ENCODE measurements at regions of chr13 and their contacts with region 1.

Region 1: DNA sequence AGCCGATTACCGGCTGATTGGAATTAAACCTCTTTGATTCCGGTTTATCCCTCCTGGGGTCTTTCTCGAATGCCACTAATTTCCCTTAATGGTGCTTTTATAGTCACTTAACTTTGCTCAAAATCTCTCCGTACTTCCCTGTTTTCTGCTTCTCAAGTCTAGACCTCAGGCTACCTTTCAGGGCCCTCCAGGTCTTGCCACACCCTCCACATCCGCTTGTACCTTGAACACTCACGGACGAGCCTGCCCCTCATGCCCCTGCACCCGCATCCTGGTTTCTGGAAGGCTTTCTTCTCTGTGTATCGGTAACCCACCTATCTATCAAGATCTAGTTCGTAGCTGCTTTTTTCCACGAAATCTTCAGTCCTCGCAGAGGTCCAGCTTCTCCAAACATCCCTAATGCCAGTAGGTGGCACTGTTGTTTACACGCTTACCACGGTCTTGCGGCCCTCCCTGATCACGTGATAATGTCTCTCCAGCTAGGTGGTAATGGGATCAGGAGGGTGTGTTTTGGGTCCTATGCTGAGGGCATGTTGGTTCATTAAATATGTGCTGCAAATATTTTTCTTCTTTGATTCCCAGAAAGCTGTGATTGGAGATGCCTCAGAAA is 13.8 kb downstream of the ATP12A start:
- DNase-seq: peak; percentile 60
- H3K4me3 Mint-ChIP-seq: peak overlapping the region; percentile 3
- H3K27ac Mint-ChIP-seq: no peak overlapping the region
- H3K4me1 Mint-ChIP-seq: peaks cover 18% of the 10 kb centered on the region
- H3K27me3 Mint-ChIP-seq: peaks cover 38% of the 10 kb centered on the region

Region 2: DNA sequence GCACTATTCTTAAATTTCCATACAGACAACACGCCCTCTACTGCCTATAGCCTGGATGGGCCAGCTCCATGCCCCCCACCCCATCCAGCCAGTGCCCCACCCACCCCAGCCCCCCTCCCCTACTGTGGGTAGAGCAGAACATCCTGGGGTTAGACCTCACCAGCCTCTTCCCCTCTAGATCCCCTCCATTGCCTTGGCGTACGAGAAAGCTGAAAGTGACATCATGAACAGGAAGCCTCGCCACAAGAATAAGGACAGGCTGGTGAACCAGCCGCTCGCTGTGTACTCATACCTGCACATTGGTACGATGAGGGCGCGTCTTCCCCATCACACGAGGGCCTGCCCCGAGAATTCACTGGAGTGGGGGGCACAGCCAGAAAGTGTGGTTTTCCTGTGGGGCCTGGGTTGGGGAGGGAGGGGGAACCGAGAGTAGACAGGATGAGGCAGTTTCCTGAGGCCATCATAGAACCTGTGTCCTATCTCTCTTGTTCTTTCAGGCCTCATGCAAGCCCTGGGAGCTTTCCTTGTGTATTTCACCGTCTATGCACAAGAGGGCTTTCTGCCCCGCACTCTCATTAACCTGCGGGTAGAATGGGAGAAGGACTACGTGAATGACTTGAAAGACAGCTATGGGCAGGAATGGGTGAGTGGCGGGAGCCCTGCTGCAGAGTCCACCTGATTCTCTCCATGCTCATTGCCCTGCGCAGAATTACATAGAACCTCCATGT is 15.4 kb after region 1 on chr13:
- CTCF ChIA-PET with region 1: interaction called, 26 read pairs
- POLR2A ChIA-PET with region 1: interaction called, 7 read pairs
- DNase-seq: peak; percentile 80
- H3K4me3 Mint-ChIP-seq: peak overlapping the region; percentile 52
- H3K27ac Mint-ChIP-seq: peak overlapping the region; percentile 77
- H3K4me1 Mint-ChIP-seq: peaks cover 28% of the 10 kb centered on the region
- H3K27me3 Mint-ChIP-seq: peaks cover 6% of the 10 kb centered on the region

Region 3: GRCh38 chr13:24718192-24718965 is 24.4 kb after region 1 on chr13:
- CTCF ChIA-PET with region 1: interaction called, 55 read pairs
- POLR2A ChIA-PET with region 1: no interaction called
- DNase-seq: no peak
- H3K4me3 Mint-ChIP-seq: no peak overlapping the region
- H3K27ac Mint-ChIP-seq: no peak overlapping the region
- H3K4me1 Mint-ChIP-seq: peaks cover 6% of the 10 kb centered on the region
- H3K27me3 Mint-ChIP-seq: peaks cover 4% of the 10 kb centered on the region

Region 4: DNA sequence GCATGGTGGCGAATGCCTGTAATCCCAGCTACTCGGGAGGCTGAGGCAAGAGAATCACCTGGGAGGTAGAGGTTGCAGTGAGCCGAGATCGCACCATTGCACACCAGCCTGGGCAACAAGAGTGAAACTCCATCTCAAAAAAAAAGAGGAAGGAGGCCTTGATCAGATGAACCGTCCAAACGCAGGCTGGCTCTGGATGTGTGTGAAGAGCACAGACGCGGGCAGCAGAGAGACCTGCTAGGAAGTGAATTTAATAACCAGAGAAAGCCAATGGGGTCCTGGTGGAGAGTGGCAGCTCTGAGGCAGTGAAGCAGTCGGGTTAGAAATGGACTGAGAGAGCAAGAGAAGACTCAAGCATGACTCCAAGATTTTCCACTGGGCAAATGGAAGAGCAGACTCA is 206.5 kb after region 1 on chr13:
- CTCF ChIA-PET with region 1: no interaction called
- POLR2A ChIA-PET with region 1: no interaction called
- DNase-seq: no peak
- H3K4me3 Mint-ChIP-seq: no peak overlapping the region
- H3K27ac Mint-ChIP-seq: no peak overlapping the region
- H3K4me1 Mint-ChIP-seq: no peaks in the 10 kb centered on the region
- H3K27me3 Mint-ChIP-seq: no peaks in the 10 kb centered on the region